SK-N-SH (cell line): ENCODE measurements at regions of chr14 and their contacts with region 1.

Region 1: GRCh38 chr14:30443368-30444007 is 115.5 kb upstream of the G2E3 start:
- DNase-seq: peak; percentile 11
- H3K4me3 ChIP-seq: no peak overlapping the region; a peak in 1 of 4 replicates
- H3K27ac ChIP-seq: no peak overlapping the region
- H3K4me1 ChIP-seq: no peaks in the 10 kb centered on the region
- H3K27me3 ChIP-seq: no peaks in the 10 kb centered on the region; the same call in none of the 2 replicates
- CTCF ChIP-seq: peak; percentile 61
- EP300 ChIP-seq: no peak
- RAD21 ChIP-seq: peak; percentile 71

Region 2: GRCh38 chr14:30375296-30375892 is 68.1 kb before region 1 on chr14:
- CTCF ChIA-PET with region 1: interaction called, 23 read pairs
- POLR2A ChIA-PET with region 1: no interaction called
- DNase-seq: peak; percentile 47
- H3K4me3 ChIP-seq: peak overlapping the region in 1 of 2 experiments; percentile 43; a peak in 1 of 4 replicates
- H3K27ac ChIP-seq: no peak overlapping the region
- H3K4me1 ChIP-seq: no peaks in the 10 kb centered on the region
- H3K27me3 ChIP-seq: no peaks in the 10 kb centered on the region
- CTCF ChIP-seq: peak; percentile 77
- EP300 ChIP-seq: no peak
- RAD21 ChIP-seq: peak; percentile 60